Mammary epithelial cell (primary cell): ENCODE measurements at regions of chr7 and their contacts with region 1.

Region 1: GRCh38 chr7:26052721-26053120 is 99.3 kb upstream of the NFE2L3 start:
- DNase-seq: peak; percentile 82
- H3K4me3 ChIP-seq: no peak overlapping the region
- H3K27ac ChIP-seq: no peak overlapping the region
- H3K4me1 ChIP-seq: peaks cover 11% of the 10 kb centered on the region
- H3K27me3 ChIP-seq: no peaks in the 10 kb centered on the region
- CTCF ChIP-seq: no peak

Region 2: DNA sequence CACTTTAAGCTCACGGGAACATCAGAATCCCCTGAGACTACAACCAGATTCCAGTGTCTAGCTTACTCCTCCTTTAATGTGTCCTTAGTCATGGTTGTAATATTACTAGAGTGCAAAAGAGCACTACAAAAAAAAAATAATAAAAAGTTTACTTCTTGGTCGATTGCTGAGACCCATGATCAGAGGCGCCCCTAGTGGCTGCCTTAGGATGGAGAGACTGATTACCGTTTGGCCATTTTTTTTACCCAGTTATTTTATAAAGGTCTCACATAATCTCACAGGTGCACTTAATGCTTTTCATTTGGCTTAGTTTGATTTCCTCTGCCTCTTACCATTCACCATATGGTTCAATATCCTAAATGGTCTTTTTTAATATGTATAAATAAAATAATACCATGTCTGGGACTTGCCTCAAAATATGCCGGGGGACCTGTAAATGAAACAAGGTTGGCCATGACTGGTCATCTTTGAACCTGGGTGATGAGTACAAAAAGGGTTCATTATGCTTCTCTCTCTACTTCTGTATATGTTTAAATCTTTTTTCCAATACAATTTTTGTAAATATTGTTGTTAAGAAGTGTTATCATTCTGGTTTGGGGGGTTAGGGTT is 232.2 kb before region 1 on chr7:
- CTCF ChIA-PET with region 1: no interaction called
- dilution Hi-C with region 1: no loop called
- in situ Hi-C with region 1: no loop called
- intact Hi-C with region 1: no loop called
- DNase-seq: no peak
- H3K4me3 ChIP-seq: no peak overlapping the region
- H3K27ac ChIP-seq: no peak overlapping the region
- H3K4me1 ChIP-seq: no peaks in the 10 kb centered on the region
- H3K27me3 ChIP-seq: peaks cover 6% of the 10 kb centered on the region
- CTCF ChIP-seq: peak; percentile 59 to 79

Region 3: GRCh38 chr7:25835197-25835596 is 217.5 kb before region 1 on chr7:
- CTCF ChIA-PET with region 1: no interaction called
- dilution Hi-C with region 1: no loop called
- in situ Hi-C with region 1: no loop called
- intact Hi-C with region 1: no loop called
- DNase-seq: peak; percentile 24
- H3K4me3 ChIP-seq: no peak overlapping the region
- H3K27ac ChIP-seq: no peak overlapping the region
- H3K4me1 ChIP-seq: no peaks in the 10 kb centered on the region
- H3K27me3 ChIP-seq: no peaks in the 10 kb centered on the region
- CTCF ChIP-seq: no peak

Region 4: DNA sequence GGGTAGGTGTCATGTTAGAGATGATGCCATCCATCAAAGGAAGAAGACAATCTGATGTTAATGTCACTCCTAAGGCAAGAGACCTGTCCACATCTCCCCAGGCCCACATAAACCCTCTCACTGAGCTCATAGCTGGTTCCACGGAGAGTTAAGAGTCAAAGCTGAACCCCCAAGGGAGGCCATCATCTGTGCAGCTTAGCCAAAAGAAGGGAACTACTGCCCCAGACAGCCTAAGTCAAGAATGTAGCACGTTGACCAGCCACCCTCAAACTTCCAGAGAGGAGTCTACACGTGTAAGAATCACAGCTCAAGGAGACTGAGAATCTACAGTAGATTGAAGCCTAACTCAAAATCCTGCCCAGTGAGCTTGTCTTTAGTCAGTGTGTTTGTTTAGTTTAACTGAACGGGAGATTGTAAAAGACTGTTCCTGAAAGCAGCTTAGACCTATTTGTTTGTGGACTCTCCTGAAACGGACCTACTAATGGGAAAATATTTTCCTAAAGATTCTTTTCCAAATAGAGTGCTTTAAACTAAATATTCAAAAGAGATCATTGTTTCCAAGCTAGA is 93.5 kb before region 1 on chr7:
- CTCF ChIA-PET with region 1: no interaction called
- dilution Hi-C with region 1: loop called (anchors 5 kb)
- in situ Hi-C with region 1: no loop called
- intact Hi-C with region 1: no loop called
- DNase-seq: no peak
- H3K4me3 ChIP-seq: no peak overlapping the region
- H3K27ac ChIP-seq: no peak overlapping the region
- H3K4me1 ChIP-seq: no peaks in the 10 kb centered on the region
- H3K27me3 ChIP-seq: peaks cover 5% of the 10 kb centered on the region
- CTCF ChIP-seq: no peak

Region 5: DNA sequence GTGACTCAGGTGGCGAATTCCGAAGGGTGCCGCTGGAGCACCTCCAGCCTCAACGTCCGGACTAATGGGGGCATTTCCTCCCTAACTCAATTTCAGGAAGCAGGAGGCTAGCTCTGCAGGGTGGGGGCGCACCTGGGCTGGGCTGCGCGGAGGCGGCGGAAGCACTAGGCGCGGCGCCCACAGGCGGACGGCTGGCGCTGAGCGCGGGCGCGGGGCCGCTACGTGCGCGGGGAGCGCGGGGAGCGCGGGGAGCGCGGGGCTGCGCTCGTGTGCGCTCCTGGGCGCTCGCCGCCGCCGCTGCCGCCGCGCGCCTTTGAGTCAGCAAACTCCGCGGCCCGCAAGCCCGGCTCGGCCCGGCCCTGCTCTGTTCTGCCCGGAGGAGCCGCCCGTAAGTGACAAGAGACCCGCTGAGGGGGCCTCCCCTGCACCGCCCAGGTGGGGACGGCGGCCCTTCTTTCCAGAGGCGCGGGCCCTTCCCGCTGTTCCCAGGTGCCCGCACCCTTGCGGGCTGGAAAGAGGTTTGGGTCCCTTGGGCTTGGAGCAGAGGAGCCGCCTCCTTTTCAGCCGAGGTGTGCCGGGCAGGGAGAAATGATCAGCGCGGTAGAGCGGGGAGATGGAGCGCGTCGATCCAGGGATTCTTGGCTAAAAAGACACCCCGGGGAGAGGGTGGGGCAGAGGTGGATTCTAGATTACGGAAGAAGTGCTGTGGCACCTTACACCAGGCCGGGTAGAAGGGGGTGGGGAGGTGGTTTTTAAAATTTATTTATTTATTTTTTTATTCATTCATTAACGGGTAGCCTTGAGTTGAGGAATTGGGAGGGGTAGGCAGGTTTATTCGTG is 239.2 kb after region 1 on chr7 and contains the start of gene SNX10:
- CTCF ChIA-PET with region 1: no interaction called
- dilution Hi-C with region 1: no loop called
- in situ Hi-C with region 1: no loop called
- intact Hi-C with region 1: no loop called
- DNase-seq: peak; percentile 57
- H3K4me3 ChIP-seq: peak within 1 kb of the TSS; percentile 66 to 79 (median 67)
- H3K27ac ChIP-seq: peak within 1 kb of the TSS; percentile 46
- H3K4me1 ChIP-seq: peaks cover 3% of the 10 kb centered on the region
- H3K27me3 ChIP-seq: no peaks in the 10 kb centered on the region
- CTCF ChIP-seq: peak; percentile 6 to 45
- total RNA-seq, gene SNX10: 6.0 to 13.0 TPM